ENCODE measurements at regions of chr13 and their contacts with region 1.

Region 1: GRCh38 chr13:110593430-110594130 is 21.8 kb upstream of the NAXD start:
- DNase-seq: peak; percentile 80
- CTCF ChIP-seq: peak; percentile 75

Region 2: GRCh38 chr13:110583178-110583865 is 10.3 kb before region 1 on chr13:
- CTCF ChIA-PET with region 1: interaction called, 10 read pairs
- POLR2A ChIA-PET with region 1: no interaction called
- DNase-seq: no peak
- CTCF ChIP-seq: no peak

Region 3: DNA sequence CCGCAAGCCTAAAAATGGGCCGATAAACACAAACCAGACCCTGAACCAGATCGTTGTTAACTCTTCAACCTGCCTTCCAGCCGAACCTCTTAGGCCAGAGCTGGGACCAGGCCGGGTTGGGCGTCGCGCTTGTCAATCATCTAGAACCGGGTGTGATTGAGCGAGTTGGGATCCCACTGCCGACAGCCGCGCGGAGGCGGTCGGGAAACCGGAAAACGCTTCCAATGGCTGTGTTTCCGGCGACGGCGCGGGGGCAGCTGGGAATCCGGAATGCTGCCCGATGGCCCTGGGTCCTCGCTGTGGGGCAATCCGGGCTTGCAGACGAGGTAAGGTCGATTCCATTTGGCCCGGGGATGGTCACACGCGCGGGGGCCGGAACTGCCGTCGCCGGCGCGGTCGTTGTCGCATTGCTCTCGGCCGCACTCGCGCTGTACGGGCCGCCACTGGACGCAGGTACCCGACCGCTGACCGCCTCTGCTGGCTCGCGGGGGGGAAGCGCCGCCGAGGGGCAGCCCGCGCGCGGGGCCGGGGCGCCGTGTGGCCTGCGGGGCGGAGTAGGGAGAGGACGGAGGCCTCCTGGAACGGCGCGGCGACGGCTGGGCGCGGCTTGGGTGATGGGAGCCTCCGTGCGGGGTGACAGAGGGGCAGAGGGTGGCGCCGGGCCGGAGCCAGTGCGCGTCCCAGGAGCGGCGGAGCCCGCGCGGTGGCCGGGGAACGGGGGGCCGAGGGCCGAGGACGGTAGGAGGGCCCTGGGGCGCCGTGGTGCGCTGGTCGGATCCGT is 21.9 kb after region 1 on chr13 and contains the start of gene NAXD:
- CTCF ChIA-PET with region 1: interaction called, 14 read pairs
- POLR2A ChIA-PET with region 1: no interaction called
- DNase-seq: peak; percentile 97
- CTCF ChIP-seq: no peak

Region 4: GRCh38 chr13:110819203-110820014 is 225.8 kb after region 1 on chr13:
- CTCF ChIA-PET with region 1: interaction called, 14 read pairs
- POLR2A ChIA-PET with region 1: no interaction called
- DNase-seq: peak; percentile 90
- CTCF ChIP-seq: peak; percentile 88

Region 5: DNA sequence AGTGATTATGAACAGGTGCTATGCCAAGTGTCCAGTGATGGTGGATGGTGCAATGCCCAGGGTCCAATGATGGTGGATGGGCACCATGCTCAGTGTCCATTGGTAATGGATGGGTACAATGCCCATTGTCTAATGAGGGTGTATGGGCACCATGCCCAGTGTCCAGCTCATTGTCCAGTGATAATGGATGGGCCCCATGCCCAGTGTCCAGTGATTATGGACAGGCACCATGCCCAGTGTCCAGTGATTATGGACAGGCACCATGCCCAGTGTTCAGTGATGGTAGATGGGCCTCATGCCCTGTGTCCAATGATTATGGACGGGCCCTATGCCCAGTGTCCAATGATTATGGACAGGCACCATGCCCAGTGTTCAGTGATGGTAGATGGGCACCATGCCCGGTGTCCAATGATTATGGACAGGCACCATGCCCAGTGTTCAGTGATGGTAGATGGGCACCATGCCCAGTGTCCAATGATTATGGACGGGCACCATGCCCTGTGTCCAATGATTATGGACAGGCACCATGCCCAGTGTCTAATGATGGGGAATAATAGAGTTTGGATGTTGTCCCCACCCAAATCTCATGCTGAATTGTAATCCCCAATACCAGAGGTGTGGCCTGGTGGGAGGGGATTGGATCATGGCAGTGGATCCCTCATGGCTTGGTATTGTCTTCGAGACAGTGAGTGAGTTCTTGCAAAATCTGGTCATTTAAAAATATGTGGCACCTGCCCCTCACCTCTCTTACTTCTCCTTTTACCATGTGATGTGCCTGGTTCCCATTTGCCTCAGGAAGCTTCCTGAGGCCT is 233.5 kb after region 1 on chr13:
- CTCF ChIA-PET with region 1: interaction called, 3 read pairs
- POLR2A ChIA-PET with region 1: interaction called, 12 read pairs
- DNase-seq: no peak
- CTCF ChIP-seq: no peak

Region 6: GRCh38 chr13:110925023-110925612 is 331.5 kb after region 1 on chr13:
- CTCF ChIA-PET with region 1: no interaction called
- POLR2A ChIA-PET with region 1: no interaction called
- DNase-seq: no peak
- CTCF ChIP-seq: peak; percentile 5